A549 (cell line): ENCODE measurements at regions of chr5 and their contacts with region 1.

Region 1: GRCh38 chr5:143014017-143014651 is 244.0 kb downstream of the ARHGAP26 start:
- DNase-seq: peak in 1 of 2 experiments; percentile 62
- ATAC-seq: peak; percentile 34 to 72; a peak in 3 of 6 replicates
- H3K4me3 ChIP-seq: no peak overlapping the region
- H3K27ac ChIP-seq: no peak overlapping the region
- H3K4me1 ChIP-seq: peaks cover 9% of the 10 kb centered on the region; the same call in 2 of the 3 replicates
- CTCF ChIP-seq: peak; percentile 30; the same call in 2 of the 3 replicates
- EP300 ChIP-seq: no peak
- POLR2A ChIP-seq: no peak
- RAD21 ChIP-seq: peak; percentile 43 to 60; a peak in 4 of 5 replicates

Region 2: GRCh38 chr5:143002459-143003328 is 11.4 kb before region 1 on chr5:
- CTCF ChIA-PET with region 1: interaction called, 21 read pairs
- POLR2A ChIA-PET with region 1: no interaction called
- DNase-seq: peak; percentile 55 to 57
- ATAC-seq: peak; percentile 75 to 86; a peak in 4 of 6 replicates
- H3K4me3 ChIP-seq: no peak overlapping the region
- H3K27ac ChIP-seq: peak overlapping the region; percentile 52 to 62
- H3K4me1 ChIP-seq: peaks cover 22% of the 10 kb centered on the region
- CTCF ChIP-seq: peak; percentile 56
- EP300 ChIP-seq: no peak
- POLR2A ChIP-seq: no peak
- RAD21 ChIP-seq: peak; percentile 77 to 83

Region 3: GRCh38 chr5:143024228-143024920 is 10.2 kb after region 1 on chr5:
- CTCF ChIA-PET with region 1: no interaction called
- POLR2A ChIA-PET with region 1: no interaction called
- DNase-seq: no peak
- ATAC-seq: no peak
- H3K4me3 ChIP-seq: no peak overlapping the region
- H3K27ac ChIP-seq: no peak overlapping the region
- H3K4me1 ChIP-seq: no peaks in the 10 kb centered on the region
- CTCF ChIP-seq: no peak
- EP300 ChIP-seq: no peak
- POLR2A ChIP-seq: no peak
- RAD21 ChIP-seq: no peak

Region 4: GRCh38 chr5:143066556-143067281 is 52.6 kb after region 1 on chr5:
- CTCF ChIA-PET with region 1: no interaction called
- POLR2A ChIA-PET with region 1: no interaction called
- DNase-seq: peak in 1 of 2 experiments; percentile 37
- ATAC-seq: peak; percentile 43 to 64; a peak in 3 of 6 replicates
- H3K4me3 ChIP-seq: no peak overlapping the region
- H3K27ac ChIP-seq: peak overlapping the region in 1 of 2 experiments; percentile 47; a peak in 4 of 6 replicates
- H3K4me1 ChIP-seq: peaks cover 38% of the 10 kb centered on the region
- CTCF ChIP-seq: no peak
- EP300 ChIP-seq: no peak
- POLR2A ChIP-seq: no peak
- RAD21 ChIP-seq: no peak